Calu3 (cell line): ENCODE measurements at regions of chr16 and their contacts with region 1.

Region 1: DNA sequence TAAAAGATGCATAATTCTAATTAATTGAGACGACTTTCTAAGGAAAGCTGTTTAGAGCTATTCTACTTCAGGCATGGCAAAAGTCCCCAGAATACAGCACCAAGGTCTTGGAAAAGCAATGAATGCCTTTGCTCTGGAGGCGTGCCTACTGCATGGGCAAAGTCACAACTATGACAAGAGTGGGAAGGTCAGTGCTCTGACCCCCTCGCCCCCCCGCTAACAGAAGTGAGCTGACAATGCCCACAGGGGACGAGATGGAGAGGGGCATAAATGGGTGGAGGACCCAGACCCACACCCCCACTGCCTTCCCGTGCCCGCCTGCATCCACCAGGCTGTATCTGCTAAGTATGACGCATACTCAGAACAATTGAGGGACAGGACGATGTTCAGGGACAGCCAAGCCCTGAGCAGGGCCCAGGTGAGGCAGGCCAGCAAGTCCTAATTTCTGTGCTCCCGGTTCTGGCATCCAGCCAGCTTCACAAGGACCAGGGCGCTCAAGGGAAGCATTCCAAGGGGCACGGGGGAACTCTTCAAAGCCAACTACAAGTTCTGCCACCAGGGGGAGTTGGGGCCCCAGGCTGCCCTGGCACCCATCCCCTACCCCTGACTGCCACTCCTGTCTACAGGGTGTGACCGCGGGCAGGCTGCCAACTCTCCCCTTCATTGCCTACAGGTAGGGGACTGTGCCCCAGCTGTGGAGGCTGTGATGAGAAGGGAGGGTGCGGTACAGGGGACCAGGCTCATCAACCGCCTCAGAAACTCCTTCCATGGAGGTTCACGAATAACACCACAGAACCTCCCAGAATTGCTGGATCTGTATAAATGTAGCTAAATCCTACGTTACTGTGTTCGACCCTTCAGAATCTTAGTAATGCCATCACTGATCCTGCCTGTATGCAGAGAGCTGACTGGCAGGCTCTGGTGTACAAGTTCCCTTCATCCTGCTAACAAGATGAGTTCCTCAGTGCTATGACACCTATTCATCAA is 20.8 kb downstream of the NPRL3 start:
- DNase-seq: peak; percentile 92
- H3K4me3 Mint-ChIP-seq: no peak overlapping the region
- H3K27ac Mint-ChIP-seq: no peak overlapping the region
- H3K4me1 Mint-ChIP-seq: peaks cover 11% of the 10 kb centered on the region
- H3K27me3 Mint-ChIP-seq: no peaks in the 10 kb centered on the region
- CTCF ChIP-seq: peak; percentile 95

Region 2: DNA sequence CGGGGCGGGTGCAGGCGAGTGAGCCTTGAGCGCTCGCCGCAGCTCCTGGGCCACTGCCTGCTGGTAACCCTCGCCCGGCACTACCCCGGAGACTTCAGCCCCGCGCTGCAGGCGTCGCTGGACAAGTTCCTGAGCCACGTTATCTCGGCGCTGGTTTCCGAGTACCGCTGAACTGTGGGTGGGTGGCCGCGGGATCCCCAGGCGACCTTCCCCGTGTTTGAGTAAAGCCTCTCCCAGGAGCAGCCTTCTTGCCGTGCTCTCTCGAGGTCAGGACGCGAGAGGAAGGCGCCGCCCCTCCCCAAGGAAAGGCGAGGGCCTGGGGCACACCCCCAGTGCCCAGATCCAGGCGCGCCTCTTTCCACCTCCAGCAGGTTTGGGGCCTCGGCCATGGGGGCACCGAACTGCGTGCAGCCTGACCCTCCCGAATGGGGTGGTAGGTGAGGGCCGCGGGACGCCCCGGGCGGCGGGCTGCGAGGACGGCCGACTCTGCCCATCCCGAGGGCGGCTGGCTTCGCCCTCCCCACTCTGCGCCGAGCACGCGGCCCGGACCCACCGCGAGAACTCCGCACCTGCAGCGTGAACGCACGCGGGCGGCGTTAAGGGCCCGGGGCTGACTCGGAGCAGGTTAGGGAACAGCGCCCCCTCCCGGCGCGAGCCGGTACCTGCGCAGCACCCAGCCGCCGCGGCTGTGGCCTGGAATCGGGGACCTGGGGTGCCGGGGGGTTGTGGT is 63.4 kb after region 1 on chr16:
- CTCF ChIA-PET with region 1: no interaction called
- intact Hi-C with region 1: loop called (anchors 2 kb)
- DNase-seq: peak; percentile 86
- H3K4me3 Mint-ChIP-seq: peak overlapping the region; percentile 32
- H3K27ac Mint-ChIP-seq: no peak overlapping the region
- H3K4me1 Mint-ChIP-seq: no peaks in the 10 kb centered on the region
- H3K27me3 Mint-ChIP-seq: peaks cover 19% of the 10 kb centered on the region
- CTCF ChIP-seq: peak; percentile 98

Region 3: GRCh38 chr16:361872-362701 is 244.4 kb after region 1 on chr16:
- CTCF ChIA-PET with region 1: interaction called, 12 read pairs
- intact Hi-C with region 1: no loop called
- DNase-seq: peak; percentile 91
- H3K4me3 Mint-ChIP-seq: peak overlapping the region; percentile 10
- H3K27ac Mint-ChIP-seq: no peak overlapping the region
- H3K4me1 Mint-ChIP-seq: no peaks in the 10 kb centered on the region
- H3K27me3 Mint-ChIP-seq: peaks cover 20% of the 10 kb centered on the region
- CTCF ChIP-seq: peak; percentile 89